Right lobe of liver (tissue), 6 donors: ENCODE measurements at regions of chr16 and their contacts with region 1.

Region 1: GRCh38 chr16:15817446-15817845 is 39.4 kb downstream of the MYH11 start:
- DNase-seq: no peak
- ATAC-seq: no peak
- H3K4me3 ChIP-seq: no peak overlapping the region
- H3K27ac ChIP-seq: no peak overlapping the region
- H3K4me1 ChIP-seq: no peaks in the 10 kb centered on the region
- H3K27me3 ChIP-seq: no peaks in the 10 kb centered on the region
- CTCF ChIP-seq: no peak
- POLR2A ChIP-seq: no peak

Region 2: DNA sequence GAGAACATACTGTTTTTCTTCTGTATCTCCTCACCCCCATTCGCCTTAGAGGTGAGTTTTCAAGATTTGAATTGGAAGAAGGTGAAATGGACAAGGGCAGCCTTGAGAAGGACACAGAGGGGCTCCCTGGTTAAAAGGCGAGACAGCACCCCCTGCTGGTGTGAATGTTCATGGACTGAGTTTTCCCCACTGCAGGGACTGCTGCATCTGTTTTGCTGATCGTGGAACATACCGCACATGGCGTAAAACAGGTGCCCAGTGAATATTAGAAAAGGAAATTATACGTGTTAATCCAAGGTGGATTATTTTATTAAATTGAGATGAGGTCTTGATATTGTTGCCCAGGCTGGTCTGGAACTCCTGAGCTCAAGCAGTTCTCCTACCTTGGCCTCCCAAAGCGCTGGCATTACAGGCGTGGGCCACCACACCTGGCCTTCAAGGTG is 112.9 kb before region 1 on chr16:
- intact Hi-C with region 1: no loop called
- DNase-seq: peak; percentile 50 to 75 (median 71)
- ATAC-seq: peak; percentile 87 to 94 (median 90)
- H3K4me3 ChIP-seq: no peak overlapping the region
- H3K27ac ChIP-seq: no peak overlapping the region
- H3K4me1 ChIP-seq: no peaks in the 10 kb centered on the region
- H3K27me3 ChIP-seq: no peaks in the 10 kb centered on the region
- CTCF ChIP-seq: peak; percentile 72 to 88 (median 84)
- POLR2A ChIP-seq: no peak

Region 3: DNA sequence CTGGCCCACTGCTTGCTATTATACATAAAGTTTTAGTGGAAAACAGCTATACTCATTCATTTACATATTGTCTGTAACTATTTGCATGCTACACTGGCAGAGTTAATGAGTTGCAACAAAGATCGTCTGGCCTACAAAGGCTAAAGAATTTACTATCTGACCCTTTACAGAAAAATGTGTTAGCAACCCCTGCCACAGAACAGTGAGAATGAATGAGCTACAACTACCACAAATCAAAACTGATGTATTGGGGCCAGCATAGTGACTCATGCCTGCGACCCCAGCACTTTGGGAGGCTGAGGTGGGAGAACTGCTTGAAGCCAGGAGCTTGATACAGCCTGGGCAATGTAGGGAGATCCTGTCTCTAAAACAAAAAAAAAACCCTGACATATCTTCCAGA is 53.3 kb before region 1 on chr16:
- intact Hi-C with region 1: loop called in 1 of 2 experiments (anchors 5 kb)
- DNase-seq: peak in 1 of 3 donors; percentile 5
- ATAC-seq: no peak
- H3K4me3 ChIP-seq: no peak overlapping the region
- H3K27ac ChIP-seq: no peak overlapping the region
- H3K4me1 ChIP-seq: no peaks in the 10 kb centered on the region
- H3K27me3 ChIP-seq: no peaks in the 10 kb centered on the region
- CTCF ChIP-seq: no peak
- POLR2A ChIP-seq: no peak

Region 4: DNA sequence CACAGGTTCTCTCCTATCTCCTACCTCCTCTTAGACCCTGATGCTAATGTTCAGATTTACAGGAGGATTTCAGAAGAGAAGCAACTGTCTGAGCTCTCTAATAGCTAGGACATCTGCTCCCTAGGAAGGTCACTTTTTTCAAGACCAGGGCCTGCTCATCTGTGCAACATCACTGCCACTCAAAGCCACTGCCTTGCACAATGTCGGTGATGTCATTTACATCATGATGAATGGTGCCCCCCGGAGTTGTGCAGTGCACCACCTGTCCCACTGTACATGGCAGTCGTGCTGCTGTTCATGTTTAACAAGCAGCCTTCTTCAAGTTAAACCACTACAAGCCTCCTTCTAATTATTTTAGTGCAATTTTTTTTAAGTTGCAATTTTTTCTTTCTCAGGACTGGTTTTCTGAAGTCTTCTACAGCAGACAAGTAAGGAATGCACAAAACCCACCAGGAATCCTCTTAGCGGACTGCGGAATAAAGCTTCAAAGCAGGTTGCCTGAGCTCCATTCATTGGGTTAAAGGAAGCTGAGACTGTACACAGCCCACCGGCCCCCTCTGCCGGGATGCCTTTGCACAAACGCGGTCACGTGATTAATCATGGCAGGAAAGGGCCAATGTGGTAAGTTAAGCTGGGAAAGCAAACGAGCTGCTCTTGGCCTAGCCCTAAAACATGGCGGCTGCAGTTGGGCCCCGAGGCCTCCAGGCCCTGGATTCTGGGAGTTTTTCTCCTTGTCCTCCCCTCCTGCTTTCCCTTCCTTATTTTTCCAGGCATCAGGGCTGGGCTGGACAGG is 34.7 kb before region 1 on chr16:
- intact Hi-C with region 1: no loop called
- DNase-seq: no peak
- ATAC-seq: no peak
- H3K4me3 ChIP-seq: no peak overlapping the region
- H3K27ac ChIP-seq: no peak overlapping the region
- H3K4me1 ChIP-seq: no peaks in the 10 kb centered on the region
- H3K27me3 ChIP-seq: no peaks in the 10 kb centered on the region
- CTCF ChIP-seq: no peak
- POLR2A ChIP-seq: no peak

Region 5: GRCh38 chr16:15907863-15908478 is 90.5 kb after region 1 on chr16:
- intact Hi-C with region 1: no loop called
- DNase-seq: no peak
- ATAC-seq: peak in 1 of 4 donors; percentile 32
- H3K4me3 ChIP-seq: no peak overlapping the region
- H3K27ac ChIP-seq: no peak overlapping the region
- H3K4me1 ChIP-seq: no peaks in the 10 kb centered on the region
- H3K27me3 ChIP-seq: no peaks in the 10 kb centered on the region
- CTCF ChIP-seq: no peak
- POLR2A ChIP-seq: no peak

Region 6: DNA sequence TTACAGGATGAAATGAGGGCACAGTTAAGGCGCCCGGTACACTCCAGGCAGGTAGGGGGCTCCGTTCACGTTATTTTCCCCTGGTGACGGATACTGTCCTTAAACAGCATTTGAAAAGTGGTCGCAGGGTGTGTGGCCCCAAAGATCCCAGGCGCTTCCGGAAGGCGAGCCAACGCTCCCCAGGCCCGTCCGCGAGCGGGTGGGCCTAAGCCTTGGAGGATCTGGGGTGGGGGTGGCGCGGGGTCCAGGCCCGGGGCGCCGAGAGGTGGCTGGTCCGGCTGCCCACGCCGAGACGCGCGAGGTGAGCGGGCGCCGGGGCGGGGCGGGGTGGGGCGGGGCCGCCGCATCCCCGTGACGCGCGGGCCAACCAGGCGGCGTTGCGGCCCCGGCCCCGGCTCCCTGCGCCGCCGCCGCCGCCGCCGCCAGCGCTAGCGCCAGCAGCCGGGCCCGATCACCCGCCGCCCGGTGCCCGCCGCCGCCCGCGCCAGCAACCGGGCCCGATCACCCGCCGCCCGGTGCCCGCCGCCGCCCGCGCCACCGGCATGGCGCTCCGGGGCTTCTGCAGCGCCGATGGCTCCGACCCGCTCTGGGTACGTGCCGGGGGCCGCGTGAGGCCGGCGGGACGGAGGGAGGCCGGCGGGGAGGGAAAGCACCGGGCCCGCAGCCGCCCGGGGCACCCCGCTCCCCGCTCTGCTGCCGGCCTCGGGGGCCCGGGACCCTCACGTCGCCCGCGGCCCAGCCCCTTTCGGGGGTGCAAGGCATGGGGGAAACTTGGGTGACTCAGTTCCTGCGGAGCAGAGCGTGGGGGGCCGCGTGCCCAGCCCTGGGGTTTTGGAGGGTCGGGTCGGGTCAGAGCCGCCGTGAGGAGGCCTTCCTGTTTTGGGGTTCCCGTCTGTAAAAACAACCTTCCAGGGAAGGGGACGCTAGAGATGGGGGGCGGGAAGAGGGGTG is 132.0 kb after region 1 on chr16 and contains the start of gene ABCC1:
- intact Hi-C with region 1: no loop called
- DNase-seq: peak; percentile 49 to 61 (median 53)
- ATAC-seq: peak; percentile 65 to 82 (median 70)
- H3K4me3 ChIP-seq: peak within 1 kb of the TSS; percentile 47 to 58 (median 54)
- H3K27ac ChIP-seq: peak within 1 kb of the TSS; percentile 26 to 65 (median 59)
- H3K4me1 ChIP-seq: no peaks in the 10 kb centered on the region
- H3K27me3 ChIP-seq: peaks cover 0 to 2% of the 10 kb centered on the region in 2 donors
- CTCF ChIP-seq: no peak
- POLR2A ChIP-seq: no peak
- total RNA-seq, gene ABCC1: 1.9 to 6.7 (median 4.1) TPM